H1 (cell line): ENCODE measurements at regions of chr2 and their contacts with region 1.

Region 1: DNA sequence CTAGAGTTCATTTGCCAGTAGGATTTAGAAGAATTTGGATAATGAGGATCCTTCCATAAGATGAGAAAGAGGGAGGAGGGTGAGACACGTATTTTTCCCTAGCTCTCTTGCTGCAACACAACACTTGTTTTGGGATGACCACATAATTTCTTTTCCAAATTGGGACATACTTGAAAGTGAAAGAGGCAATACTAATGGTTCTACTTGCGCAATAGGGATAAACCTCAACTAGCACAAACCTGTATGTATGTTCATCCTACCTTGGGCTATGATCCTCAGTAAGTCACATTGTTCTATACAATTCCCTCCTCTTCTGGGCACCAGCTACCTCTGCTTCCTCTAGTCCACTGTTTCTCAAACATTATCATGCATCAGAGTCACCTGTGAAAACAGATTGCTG is 1208.8 kb upstream of the LRRTM1 start:
- DNase-seq: no peak
- H3K4me3 ChIP-seq: no peak overlapping the region
- H3K27ac ChIP-seq: no peak overlapping the region
- H3K4me1 ChIP-seq: no peaks in the 10 kb centered on the region
- H3K27me3 ChIP-seq: no peaks in the 10 kb centered on the region
- CTCF ChIP-seq: no peak
- EP300 ChIP-seq: no peak
- POLR2A ChIP-seq: no peak
- RAD21 ChIP-seq: no peak

Region 2: DNA sequence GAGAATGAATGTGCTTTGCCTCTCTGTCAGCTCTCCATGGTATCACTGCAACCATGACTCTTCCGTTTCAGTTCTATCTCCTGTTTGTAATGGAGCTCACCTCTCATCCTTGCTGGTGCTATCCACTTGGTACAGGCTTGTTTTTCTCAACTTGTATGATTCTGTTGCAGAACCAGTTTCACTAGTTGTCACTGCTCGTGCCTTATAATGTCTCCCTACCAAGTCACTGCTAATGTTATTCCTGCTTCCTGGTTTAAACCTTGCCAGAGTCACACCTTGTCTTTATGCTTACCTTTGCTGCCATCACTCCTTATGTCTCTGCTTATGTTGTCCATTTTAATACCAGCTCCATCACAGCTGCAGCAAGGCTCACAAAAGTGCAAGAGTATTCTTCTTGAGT is 17.8 kb before region 1 on chr2:
- CTCF ChIA-PET with region 1: no interaction called
- POLR2A ChIA-PET with region 1: no interaction called
- DNase-seq: no peak
- H3K4me3 ChIP-seq: no peak overlapping the region
- H3K27ac ChIP-seq: no peak overlapping the region
- H3K4me1 ChIP-seq: no peaks in the 10 kb centered on the region
- H3K27me3 ChIP-seq: no peaks in the 10 kb centered on the region
- CTCF ChIP-seq: no peak
- EP300 ChIP-seq: no peak
- POLR2A ChIP-seq: no peak
- RAD21 ChIP-seq: no peak

Region 3: DNA sequence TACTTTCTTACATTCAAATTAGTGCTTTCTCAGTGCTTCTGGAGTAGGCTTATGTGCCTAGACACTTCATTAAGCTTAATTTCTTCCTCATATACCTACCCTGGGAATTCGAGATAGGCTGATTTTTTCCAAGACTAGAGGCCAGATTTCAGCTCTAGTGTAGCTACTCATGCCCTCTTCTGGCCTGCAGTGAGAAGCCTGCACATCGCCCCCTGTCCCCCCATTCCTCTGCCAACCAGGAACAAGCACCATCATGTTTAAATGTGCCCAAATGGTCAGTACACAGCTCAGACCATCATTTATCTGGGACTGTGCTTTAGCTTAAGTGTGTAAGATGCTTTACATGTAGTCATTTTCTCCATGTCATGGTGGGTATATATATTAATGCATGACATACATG is 10.0 kb after region 1 on chr2:
- CTCF ChIA-PET with region 1: interaction called, 14 read pairs
- POLR2A ChIA-PET with region 1: no interaction called
- DNase-seq: no peak
- H3K4me3 ChIP-seq: no peak overlapping the region
- H3K27ac ChIP-seq: no peak overlapping the region
- H3K4me1 ChIP-seq: no peaks in the 10 kb centered on the region
- H3K27me3 ChIP-seq: no peaks in the 10 kb centered on the region
- CTCF ChIP-seq: peak; percentile 49 to 76 (median 56)
- EP300 ChIP-seq: no peak
- POLR2A ChIP-seq: no peak
- RAD21 ChIP-seq: peak; percentile 57 to 63